CD4-positive, alpha-beta T cell (primary cell): ENCODE measurements at regions of chr11 and their contacts with region 1.

Region 1: GRCh38 chr11:74004759-74005615 is 3.9 kb downstream of the UCP3 start:
- DNase-seq: peak; percentile 77 to 96 (median 84)
- ATAC-seq: peak; percentile 100
- H3K4me3 ChIP-seq: peak overlapping the region; percentile 39
- H3K4me3 Mint-ChIP-seq: peak overlapping the region; percentile 81
- H3K27ac ChIP-seq: peak overlapping the region; percentile 64 to 70
- H3K27ac Mint-ChIP-seq: peak overlapping the region; percentile 94
- H3K4me1 ChIP-seq: peaks cover 75% of the 10 kb centered on the region
- H3K4me1 Mint-ChIP-seq: peaks cover 73% of the 10 kb centered on the region
- H3K27me3 ChIP-seq: no peaks in the 10 kb centered on the region
- H3K27me3 Mint-ChIP-seq: no peaks in the 10 kb centered on the region
- CTCF ChIP-seq: peak; percentile 45

Region 2: DNA sequence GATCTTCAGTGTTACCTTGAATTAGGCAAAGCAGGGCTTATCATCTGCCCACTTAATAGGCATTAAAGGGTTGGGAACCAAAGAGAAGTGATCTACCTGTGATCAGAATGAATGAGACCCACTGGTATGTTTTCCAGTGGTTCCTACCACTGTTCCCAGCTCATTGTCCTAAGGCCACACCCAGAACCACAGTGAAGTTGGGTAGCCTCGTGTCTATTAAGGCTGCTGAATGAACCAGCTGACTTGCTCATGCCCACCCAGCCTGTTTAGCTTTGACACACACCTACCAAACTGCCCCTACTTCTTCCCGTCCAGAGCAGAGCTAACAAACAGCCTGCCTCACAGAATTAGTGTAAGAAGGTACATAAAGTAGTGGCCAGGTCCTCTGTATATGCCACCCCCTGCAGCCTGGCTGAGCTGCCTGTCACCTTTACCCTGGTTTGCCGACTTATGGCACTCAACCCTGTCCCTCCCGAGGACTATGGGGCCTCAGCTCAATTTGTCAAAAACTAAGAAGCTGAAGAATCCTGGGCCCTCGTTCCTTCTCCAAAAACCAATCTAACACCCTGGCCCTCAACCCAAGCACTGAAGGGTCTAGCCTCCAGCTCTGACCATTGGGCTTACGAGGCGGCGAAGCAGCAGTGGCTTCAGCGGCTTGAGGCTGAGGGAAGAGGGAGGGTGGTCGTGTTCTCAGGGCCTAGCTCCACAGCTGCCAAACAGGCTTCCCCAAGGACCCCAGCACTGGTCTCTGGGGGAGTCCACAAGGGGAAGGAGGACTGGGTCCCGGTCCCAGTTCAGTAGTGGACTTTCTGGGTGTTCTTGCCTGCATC is 32.2 kb before region 1 on chr11:
- CTCF ChIA-PET with region 1: interaction called, 7 read pairs
- POLR2A ChIA-PET with region 1: interaction called, 316 read pairs
- intact Hi-C with region 1: loop called (anchors 2 kb)
- DNase-seq: peak in 1 of 14 experiments; percentile 36
- ATAC-seq: no peak
- H3K4me3 ChIP-seq: no peak overlapping the region
- H3K4me3 Mint-ChIP-seq: peak overlapping the region; percentile 56
- H3K27ac ChIP-seq: peak overlapping the region; percentile 56 to 72
- H3K27ac Mint-ChIP-seq: peak overlapping the region; percentile 98
- H3K4me1 ChIP-seq: peaks cover 100% of the 10 kb centered on the region
- H3K4me1 Mint-ChIP-seq: peaks cover 100% of the 10 kb centered on the region
- H3K27me3 ChIP-seq: no peaks in the 10 kb centered on the region
- H3K27me3 Mint-ChIP-seq: no peaks in the 10 kb centered on the region
- CTCF ChIP-seq: no peak

Region 3: DNA sequence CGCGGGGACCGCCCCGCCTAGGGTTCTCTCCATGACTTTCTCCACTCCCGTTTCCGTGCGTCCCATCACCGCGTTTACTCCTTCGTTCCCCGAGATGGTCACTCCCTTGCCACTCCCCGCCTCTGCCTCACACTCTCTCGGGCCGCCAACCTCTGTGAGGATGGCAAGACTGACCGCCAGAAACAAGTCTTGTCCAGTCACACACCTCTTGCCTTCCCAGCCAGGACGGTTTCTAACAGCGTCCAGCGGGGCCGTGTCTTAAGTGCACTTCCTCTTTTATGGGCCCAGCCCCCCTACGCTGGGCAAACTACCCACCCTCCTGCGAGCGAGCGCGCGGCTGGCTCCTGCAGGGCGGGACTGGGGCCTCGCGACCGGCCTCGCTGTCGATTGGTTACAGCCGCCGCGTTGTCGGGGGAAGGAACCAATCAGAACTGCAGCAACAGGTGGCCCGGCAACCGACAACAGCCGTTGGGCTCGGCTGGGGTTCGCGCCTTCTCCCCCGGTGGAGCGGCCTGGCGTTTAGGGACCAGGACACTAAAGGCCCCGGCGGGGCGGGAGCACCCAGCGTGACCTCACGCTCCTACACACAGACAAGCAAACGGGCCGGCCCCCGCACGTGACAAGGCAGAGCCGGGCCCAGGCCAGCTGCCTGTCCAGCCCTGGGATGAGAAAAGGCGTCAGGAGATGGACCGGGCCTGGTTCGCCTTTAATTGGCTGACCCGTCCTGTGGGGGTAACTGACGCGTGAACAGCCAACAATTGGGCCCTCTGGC is 21.8 kb before region 1 on chr11:
- CTCF ChIA-PET with region 1: interaction called, 26 read pairs
- POLR2A ChIA-PET with region 1: interaction called, 316 read pairs
- intact Hi-C with region 1: loop called in 1 of 2 experiments (anchors 1 kb)
- DNase-seq: peak; percentile 86 to 97 (median 90)
- ATAC-seq: peak; percentile 73
- H3K4me3 ChIP-seq: peak overlapping the region; percentile 87
- H3K4me3 Mint-ChIP-seq: peak overlapping the region; percentile 100
- H3K27ac ChIP-seq: peak overlapping the region; percentile 81 to 96
- H3K27ac Mint-ChIP-seq: peak overlapping the region; percentile 98
- H3K4me1 ChIP-seq: peaks cover 50% of the 10 kb centered on the region
- H3K4me1 Mint-ChIP-seq: peaks cover 57% of the 10 kb centered on the region
- H3K27me3 ChIP-seq: no peaks in the 10 kb centered on the region
- H3K27me3 Mint-ChIP-seq: no peaks in the 10 kb centered on the region
- CTCF ChIP-seq: no peak

Region 4: DNA sequence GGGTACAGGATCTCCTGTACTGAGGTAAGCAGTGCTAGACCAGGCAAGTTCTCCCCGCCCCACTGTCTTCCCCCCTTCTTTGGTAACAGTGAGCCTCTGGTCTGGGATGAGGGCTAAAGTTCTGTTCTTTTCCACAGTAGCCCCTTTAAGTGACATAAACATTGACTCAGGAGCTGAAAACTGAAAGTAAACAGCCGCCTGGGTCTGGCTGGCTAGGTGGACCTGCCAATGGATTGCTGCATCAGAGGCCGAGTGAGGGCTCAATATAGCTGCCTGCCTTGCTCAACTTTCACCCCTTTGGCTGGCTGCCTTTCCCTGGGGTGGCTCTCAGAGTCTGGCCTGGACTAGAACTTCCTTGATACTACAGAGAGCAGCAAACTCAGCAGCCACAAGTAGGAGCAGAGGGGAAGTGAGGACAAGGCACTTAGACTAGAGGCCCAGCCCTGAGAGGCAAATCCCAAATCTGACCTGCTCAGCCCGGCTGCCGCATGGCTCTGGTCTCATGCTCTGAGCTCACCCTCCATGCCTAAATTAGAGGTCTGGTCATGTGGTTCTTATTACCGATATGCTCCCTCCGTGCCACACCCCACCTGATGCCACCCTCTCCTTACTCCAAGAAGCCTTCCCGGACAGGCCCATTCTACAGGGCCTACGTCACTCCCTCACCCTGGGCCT is 13.5 kb after region 1 on chr11:
- CTCF ChIA-PET with region 1: interaction called, 5 read pairs
- POLR2A ChIA-PET with region 1: interaction called, 16 read pairs
- intact Hi-C with region 1: no loop called
- DNase-seq: peak in 2 of 14 experiments; percentile 40 to 49
- ATAC-seq: no peak
- H3K4me3 ChIP-seq: no peak overlapping the region
- H3K4me3 Mint-ChIP-seq: no peak overlapping the region
- H3K27ac ChIP-seq: no peak overlapping the region
- H3K27ac Mint-ChIP-seq: no peak overlapping the region
- H3K4me1 ChIP-seq: peaks cover 75% of the 10 kb centered on the region
- H3K4me1 Mint-ChIP-seq: peaks cover 45% of the 10 kb centered on the region
- H3K27me3 ChIP-seq: no peaks in the 10 kb centered on the region
- H3K27me3 Mint-ChIP-seq: no peaks in the 10 kb centered on the region
- CTCF ChIP-seq: no peak

Region 5: GRCh38 chr11:74097686-74098237 is 92.8 kb after region 1 on chr11:
- CTCF ChIA-PET with region 1: no interaction called
- POLR2A ChIA-PET with region 1: no interaction called
- intact Hi-C with region 1: no loop called
- DNase-seq: peak in 1 of 14 experiments; percentile 8
- ATAC-seq: no peak
- H3K4me3 ChIP-seq: no peak overlapping the region
- H3K4me3 Mint-ChIP-seq: no peak overlapping the region
- H3K27ac ChIP-seq: no peak overlapping the region
- H3K27ac Mint-ChIP-seq: no peak overlapping the region
- H3K4me1 ChIP-seq: no peaks in the 10 kb centered on the region
- H3K4me1 Mint-ChIP-seq: no peaks in the 10 kb centered on the region
- H3K27me3 ChIP-seq: no peaks in the 10 kb centered on the region
- H3K27me3 Mint-ChIP-seq: no peaks in the 10 kb centered on the region
- CTCF ChIP-seq: no peak